Heart left ventricle (tissue), 16 donors: ENCODE measurements at regions of chr3 and their contacts with region 1.

Region 1: GRCh38 chr3:152444029-152444641 is 175.4 kb downstream of the MBNL1 start:
- DNase-seq: no peak
- ATAC-seq: peak in 3 of 4 donors; percentile 48 to 68 (median 65)
- H3K4me3 ChIP-seq: no peak overlapping the region
- H3K27ac ChIP-seq: peak overlapping the region in 7 of 12 donors; percentile 7 to 45 (median 26)
- H3K4me1 ChIP-seq: peaks cover 0 to 78% (median 42%) of the 10 kb centered on the region in 12 donors
- H3K27me3 ChIP-seq: no peaks in the 10 kb centered on the region
- CTCF ChIP-seq: peak; percentile 52 to 80 (median 76)
- POLR2A ChIP-seq: no peak

Region 2: DNA sequence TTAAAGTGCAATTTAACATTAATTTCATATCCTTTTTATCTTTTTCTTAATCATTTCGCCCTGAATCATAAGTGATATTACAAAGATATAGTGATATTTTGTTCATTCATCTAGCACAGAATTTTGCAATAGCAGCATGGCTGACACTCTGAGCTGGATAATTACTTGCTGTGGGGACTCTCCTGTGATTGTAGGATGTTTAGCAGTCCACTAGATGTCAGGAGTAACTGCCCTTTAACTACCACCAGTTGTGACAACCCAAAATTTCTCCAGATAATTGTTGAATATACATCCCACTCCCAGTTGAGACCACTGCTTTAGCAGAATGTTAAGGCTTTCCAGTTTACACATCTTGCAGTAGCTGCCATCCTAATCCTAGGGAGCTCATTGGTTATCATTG is 372.2 kb before region 1 on chr3:
- intact Hi-C with region 1: loop called in 7 of 10 experiments (anchors 5 to 10 kb)
- DNase-seq: no peak
- ATAC-seq: peak in 3 of 4 donors; percentile 52 to 68 (median 55)
- H3K4me3 ChIP-seq: no peak overlapping the region
- H3K27ac ChIP-seq: no peak overlapping the region
- H3K4me1 ChIP-seq: peaks cover 0 to 4% (median 0%) of the 10 kb centered on the region in 12 donors
- H3K27me3 ChIP-seq: no peaks in the 10 kb centered on the region
- CTCF ChIP-seq: peak; percentile 8 to 60 (median 41)
- POLR2A ChIP-seq: no peak

Region 3: GRCh38 chr3:152222327-152222726 is 221.8 kb before region 1 on chr3:
- intact Hi-C with region 1: loop called in 4 of 10 experiments (anchors 5 to 10 kb)
- DNase-seq: no peak
- ATAC-seq: peak in 3 of 4 donors; percentile 29 to 75 (median 65)
- H3K4me3 ChIP-seq: peak overlapping the region in 1 of 12 donors; percentile 6
- H3K27ac ChIP-seq: peak overlapping the region in 10 of 12 donors; percentile 19 to 80 (median 57)
- H3K4me1 ChIP-seq: peaks cover 0 to 49% (median 8%) of the 10 kb centered on the region in 12 donors
- H3K27me3 ChIP-seq: no peaks in the 10 kb centered on the region
- CTCF ChIP-seq: no peak
- POLR2A ChIP-seq: no peak

Region 4: DNA sequence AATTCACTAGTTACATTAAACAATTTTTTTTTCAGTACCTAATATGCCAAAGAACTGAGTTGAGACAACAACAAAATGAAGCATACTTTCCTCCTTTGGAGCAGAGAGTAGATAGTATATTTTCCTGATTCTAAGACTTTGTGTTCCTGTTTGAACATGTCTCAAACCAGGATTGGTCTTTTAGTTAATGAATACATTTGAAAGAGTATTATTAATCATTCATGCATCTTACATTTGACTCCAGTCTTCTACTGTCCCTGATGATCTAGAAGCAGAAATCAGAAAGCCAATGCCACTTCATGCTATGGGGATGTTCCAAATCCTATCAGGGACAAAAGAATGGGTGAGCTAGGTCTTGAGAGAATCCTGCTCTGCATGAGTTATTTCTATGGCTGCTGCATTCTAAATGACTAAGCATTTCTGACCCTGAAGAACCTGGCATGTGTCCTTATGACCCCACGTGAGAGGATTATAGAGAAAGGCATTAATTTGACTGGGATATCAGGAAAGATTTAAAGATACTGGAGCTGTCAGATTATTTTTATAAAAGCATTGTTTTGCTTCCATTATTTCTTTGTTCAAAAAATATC is 208.3 kb before region 1 on chr3:
- intact Hi-C with region 1: loop called in 1 of 10 experiments (anchors 10 kb)
- DNase-seq: no peak
- ATAC-seq: no peak
- H3K4me3 ChIP-seq: no peak overlapping the region
- H3K27ac ChIP-seq: no peak overlapping the region
- H3K4me1 ChIP-seq: peaks cover 0 to 6% (median 0%) of the 10 kb centered on the region in 12 donors
- H3K27me3 ChIP-seq: no peaks in the 10 kb centered on the region
- CTCF ChIP-seq: no peak
- POLR2A ChIP-seq: no peak

Region 5: DNA sequence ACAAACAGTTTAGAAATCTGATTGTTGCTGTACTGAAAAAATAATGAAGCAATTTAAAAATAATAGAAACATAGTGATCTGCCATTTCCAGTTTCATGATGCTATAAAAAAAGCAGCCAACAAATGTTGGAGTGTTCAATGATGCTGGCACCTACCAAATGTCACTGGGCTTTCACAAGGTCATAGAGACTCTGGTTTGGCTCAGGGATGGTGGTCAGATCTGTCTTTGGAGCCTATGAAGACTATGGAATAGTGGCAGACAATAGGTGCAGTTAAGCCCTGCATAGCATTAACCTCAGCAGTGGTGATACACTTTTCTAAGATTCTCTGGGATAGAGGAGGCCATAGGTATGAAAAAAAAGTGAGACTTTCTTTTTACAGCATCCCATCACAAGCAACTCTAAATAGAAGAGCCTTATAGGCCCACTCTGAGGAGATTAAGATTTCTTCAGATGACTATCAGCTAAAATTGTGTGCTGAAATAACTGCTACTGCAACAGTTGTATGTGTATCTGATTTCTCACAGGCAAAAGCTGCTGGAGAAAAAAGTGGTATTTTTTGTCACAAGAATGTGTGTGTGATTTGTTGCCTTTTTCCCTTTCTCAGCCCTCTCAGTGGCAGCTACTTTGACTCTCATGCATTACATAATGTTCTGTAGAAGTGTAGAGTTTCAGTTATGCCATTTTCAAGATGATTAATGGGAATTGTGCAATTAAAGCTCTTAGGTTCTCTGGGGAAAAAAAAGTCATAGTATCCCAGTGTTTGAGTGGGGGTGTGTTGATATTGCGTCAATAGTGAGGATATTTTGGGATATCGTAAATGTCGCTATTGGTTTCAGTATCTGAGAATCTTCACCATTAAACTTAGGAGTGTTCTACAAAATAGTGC is 38.0 kb before region 1 on chr3:
- intact Hi-C with region 1: loop called in 1 of 10 experiments (anchors 5 kb)
- DNase-seq: peak in 1 of 5 donors; percentile 36
- ATAC-seq: peak in 3 of 4 donors; percentile 30 to 64 (median 58)
- H3K4me3 ChIP-seq: peak overlapping the region in 3 of 12 donors; percentile 17 to 25 (median 20)
- H3K27ac ChIP-seq: peak overlapping the region; percentile 68 to 94 (median 84)
- H3K4me1 ChIP-seq: peaks cover 7 to 80% (median 63%) of the 10 kb centered on the region in 12 donors
- H3K27me3 ChIP-seq: no peaks in the 10 kb centered on the region
- CTCF ChIP-seq: no peak
- POLR2A ChIP-seq: no peak